GM10248 (cell line): ENCODE measurements at regions of chr6 and their contacts with region 1.

Region 1: DNA sequence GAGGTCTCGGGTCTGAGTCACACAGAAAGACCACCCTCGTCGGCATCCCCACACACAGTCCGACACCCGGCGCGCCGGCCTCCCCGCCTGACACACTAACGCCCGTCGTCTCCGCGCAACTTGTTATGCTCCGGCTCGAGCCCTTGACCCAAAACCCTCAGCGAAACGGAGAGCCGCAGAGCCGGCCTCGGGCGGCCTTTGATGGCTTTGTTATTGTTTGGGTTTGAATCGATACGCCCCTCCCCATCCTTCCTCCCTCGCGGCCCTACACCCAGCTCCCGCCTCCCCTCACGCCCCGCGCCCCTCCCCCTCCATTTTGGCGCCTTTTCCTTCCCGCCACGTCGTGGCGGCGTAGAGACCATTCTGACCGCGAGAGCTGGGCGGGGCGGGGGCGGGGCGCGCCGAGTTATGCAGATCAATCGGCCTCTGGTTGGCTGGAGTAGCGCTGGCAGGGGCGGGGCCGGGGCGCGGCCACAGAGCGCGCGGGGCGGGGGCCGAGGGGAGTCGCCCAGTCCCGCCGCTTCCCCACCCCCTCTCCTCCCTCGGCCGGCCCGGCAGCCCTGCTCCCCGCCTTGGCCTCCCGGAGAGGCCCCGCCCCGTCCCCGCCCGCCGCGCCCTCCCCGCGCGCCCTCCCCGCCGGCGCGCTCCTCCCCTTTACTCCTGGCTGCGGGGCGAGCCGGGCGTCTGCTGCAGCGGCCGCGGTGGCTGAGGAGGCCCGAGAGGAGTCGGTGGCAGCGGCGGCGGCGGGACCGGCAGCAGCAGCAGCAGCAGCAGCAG is at the start of gene PIM1:
- DNase-seq: peak; percentile 98
- CTCF ChIP-seq: no peak

Region 2: DNA sequence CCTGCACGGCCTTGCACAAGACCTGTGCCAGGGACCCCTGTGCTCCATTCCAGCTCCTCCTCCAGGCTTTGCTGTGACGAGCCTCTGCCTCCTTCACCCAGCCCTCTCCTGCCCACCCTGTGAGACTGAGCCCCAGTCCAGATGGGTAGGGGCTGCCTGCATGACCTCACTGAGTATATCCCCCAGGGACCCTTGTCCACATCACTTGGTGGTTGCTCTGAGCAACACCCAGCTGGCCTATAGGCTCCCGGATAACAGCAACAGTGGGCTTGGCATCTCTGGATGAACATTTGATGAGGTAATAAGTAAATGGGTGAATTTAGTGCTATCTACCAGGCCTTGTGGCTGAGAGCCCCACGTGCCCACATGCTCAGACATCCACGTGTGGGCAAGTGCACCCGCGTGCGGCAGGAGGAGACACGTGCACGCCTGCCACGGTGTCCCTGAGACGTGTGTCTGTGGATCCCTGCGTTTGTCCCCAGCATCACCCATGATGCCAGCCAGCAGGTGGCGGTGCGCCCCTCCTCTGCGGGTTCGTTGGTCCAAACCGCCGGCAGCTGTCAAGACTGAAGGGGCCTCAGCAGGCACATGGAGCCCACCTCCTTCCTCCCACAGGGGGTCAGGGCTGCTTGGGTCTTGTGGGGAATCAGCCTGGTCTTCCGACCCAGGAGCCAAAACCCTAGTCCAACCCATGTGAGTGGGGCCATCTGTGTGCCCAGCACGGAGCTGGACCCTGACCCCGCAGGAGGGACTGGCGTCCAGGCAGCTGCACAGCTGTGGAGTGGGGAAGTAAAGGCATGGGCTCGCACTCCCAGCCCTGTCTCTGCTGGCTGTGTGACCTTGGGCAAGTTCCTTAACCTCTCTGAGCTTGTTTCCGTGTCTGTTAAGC is 118.3 kb before region 1 on chr6:
- CTCF ChIA-PET with region 1: interaction called, 151 read pairs
- POLR2A ChIA-PET with region 1: interaction called, 9 read pairs
- DNase-seq: peak; percentile 88
- CTCF ChIP-seq: peak; percentile 92

Region 3: DNA sequence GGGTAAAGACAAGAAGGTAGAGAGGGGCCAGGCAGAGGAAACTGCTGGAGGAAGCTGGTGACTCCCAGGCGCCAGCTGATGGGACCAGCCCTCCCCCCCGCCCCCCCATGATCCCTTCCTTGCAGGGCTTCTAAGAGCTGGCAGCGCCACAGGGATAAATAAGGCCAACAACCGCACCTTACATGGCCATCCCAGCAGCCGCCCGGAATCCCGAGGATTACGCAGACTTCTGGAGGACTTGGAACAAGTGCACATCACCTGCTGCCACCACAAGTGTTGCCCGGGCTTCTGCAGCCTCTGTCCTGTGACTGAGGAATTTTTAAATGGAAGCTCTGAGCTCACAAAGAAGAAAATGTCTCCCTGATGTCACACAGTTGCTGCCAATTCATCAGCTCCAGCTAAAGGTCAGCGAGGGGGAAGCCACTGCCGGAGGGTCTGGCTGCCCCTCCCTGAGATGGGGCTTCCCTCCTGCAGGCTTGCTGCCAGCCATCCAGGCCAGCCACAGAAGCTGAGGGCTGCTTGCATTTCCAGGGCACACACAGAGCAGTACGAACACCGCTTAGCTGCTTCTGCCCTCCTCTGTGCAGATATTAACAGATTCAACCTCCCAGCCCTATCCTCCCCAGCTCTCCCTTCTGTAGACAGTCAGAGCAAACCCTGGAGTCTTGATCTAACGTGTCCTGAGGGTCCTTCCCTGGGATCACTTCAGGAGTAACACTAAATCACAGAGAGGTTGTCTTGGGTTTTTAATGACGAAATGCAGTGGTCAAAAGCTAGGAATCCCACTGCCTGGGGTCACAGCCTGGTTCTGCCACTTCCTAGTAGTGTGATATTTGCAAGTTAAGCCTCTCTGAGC is 38.4 kb before region 1 on chr6:
- CTCF ChIA-PET with region 1: interaction called, 14 read pairs
- POLR2A ChIA-PET with region 1: no interaction called
- DNase-seq: no peak
- CTCF ChIP-seq: no peak

Region 4: DNA sequence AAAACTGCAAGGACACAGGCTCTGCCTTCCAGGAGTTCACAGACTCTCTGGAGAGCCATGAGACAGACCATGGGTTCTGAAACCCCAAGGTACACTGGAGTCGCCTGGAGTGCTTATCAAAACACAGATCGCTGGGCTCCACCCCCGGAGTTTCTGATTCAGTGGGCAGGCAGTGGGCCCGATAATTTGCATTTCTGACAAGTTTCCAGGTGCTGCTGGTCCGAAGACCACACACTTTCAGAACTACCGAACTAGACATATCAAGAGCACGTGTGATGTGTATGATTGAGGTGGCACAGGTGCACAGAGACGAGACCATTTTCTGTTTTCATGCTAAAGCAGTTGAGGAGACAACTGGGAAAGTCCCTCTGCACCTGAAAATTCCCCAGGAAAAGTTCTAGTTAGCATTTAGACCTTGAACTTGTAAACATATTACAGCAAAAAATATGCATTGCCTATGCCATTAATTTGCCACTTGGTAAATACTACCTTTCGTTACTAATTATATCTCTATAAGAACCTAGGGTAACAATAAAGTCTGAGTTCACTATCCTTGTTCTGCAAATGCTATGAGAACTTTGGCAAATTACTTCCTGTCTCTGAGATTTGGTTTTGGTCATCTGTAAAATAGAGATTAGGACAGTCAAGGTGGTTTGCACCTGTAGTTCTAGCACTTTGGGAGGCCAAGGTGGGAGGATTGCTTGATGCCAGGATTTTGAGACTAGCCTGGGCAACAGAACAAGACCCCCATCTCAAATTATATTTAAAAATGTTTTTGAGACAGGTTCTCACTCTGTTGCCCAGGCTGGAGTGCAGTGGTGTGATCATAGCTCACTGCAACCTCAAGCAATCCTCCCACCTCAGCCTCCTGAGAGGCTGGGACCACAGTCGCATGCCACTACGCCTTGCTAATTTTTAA is 14.0 kb before region 1 on chr6:
- CTCF ChIA-PET with region 1: interaction called, 20 read pairs
- POLR2A ChIA-PET with region 1: no interaction called
- DNase-seq: peak; percentile 81
- CTCF ChIP-seq: no peak

Region 5: DNA sequence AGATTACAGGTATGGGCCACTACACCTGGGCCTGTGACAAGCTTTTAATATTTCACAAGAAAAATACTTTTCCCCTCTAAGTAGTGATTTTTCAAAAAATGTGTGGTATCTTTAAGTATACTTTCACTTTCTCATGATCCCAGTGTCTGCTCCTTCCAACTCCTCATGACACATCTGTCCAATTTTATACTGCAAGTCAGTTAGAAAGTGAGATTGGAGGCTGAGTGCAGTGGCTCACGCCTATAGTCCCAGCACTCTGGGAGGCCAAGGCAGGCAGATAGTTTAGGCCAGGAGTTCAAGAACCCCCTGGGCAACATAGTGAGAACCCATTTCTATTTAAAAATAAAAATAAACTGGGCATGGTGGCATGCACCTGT is 20.5 kb after region 1 on chr6:
- CTCF ChIA-PET with region 1: interaction called, 17 read pairs
- POLR2A ChIA-PET with region 1: interaction called, 4 read pairs
- DNase-seq: no peak
- CTCF ChIP-seq: no peak

Region 6: DNA sequence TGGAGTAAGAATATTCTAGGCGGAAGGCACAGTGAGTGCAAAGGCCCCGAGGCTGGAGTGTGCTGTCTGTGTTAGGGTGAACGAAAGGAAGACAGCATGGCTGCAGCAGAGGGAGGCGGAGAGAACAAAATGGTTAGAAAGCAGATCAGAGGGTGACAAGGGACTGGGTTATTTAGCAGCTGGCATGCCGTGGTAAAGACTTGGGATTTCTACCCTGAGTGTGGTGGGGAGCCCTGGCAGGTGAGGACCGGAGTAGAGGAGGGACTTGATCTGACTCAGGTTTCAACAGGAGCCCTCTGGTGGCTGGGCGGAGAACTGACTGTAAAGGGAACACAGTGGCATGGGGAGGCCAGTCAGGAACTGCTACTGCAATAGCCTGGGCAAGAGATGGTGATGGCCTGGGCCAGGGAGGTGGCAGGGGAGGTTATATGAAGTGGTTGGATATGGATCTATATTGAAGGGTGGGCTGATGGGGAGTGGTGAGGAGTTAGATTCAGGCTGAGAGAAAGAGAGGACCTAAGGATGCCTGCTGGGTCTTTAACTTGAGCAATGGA is 38.3 kb after region 1 on chr6:
- CTCF ChIA-PET with region 1: interaction called, 125 read pairs
- POLR2A ChIA-PET with region 1: interaction called, 4 read pairs
- DNase-seq: peak; percentile 81
- CTCF ChIP-seq: peak; percentile 62

Region 7: DNA sequence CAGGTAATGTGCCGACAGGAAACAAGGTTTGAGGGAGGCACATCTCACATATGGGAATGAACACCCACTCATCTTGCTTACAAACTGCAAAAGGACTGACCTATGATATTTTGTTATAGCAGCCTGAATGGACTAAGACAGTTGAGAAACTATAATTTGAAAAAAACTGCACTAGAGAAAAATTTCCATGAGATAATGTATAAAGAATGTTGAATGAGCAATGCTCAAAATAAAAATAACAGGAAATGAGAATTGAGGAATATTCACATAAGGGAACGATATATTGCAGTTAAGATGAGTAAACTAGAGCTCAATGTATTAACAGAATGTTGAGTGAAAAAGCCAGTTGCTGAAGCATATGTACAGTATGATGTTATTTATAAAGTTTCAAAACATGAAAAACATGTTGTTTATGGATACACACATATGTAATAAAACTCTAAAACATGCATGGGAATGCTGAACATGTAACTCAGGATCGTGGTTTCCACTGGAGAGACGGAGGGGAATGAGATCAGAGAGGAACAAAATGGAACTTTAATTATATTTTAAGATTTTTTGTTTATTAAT is 81.6 kb after region 1 on chr6:
- CTCF ChIA-PET with region 1: no interaction called
- POLR2A ChIA-PET with region 1: no interaction called
- DNase-seq: no peak
- CTCF ChIP-seq: no peak